ENCODE measurements at regions of chr16 and their contacts with region 1.

Region 1: GRCh38 chr16:8963825-8964441 is at the start of gene USP7:
- DNase-seq: peak; percentile 86
- ATAC-seq: peak; percentile 97
- H3K4me3 ChIP-seq: peak within 1 kb of the TSS; percentile 72
- H3K27ac ChIP-seq: peak within 1 kb of the TSS; percentile 78
- H3K4me1 ChIP-seq: peaks cover 18% of the 10 kb centered on the region
- H3K27me3 ChIP-seq: no peaks in the 10 kb centered on the region
- CTCF ChIP-seq: no peak
- POLR2A ChIP-seq: peak; percentile 77
- RAD21 ChIP-seq: no peak
- total RNA-seq, gene USP7: 28.3 and 45.8 TPM in 2 replicates

Region 2: GRCh38 chr16:8928467-8928957 is 35.4 kb before region 1 on chr16:
- CTCF ChIA-PET with region 1: no interaction called
- POLR2A ChIA-PET with region 1: no interaction called
- dilution Hi-C with region 1: no loop called
- in situ Hi-C with region 1: no loop called
- intact Hi-C with region 1: loop called (anchors 5 kb)
- DNase-seq: peak; percentile 60
- ATAC-seq: peak; percentile 63
- H3K4me3 ChIP-seq: no peak overlapping the region
- H3K27ac ChIP-seq: no peak overlapping the region
- H3K4me1 ChIP-seq: peaks cover 2% of the 10 kb centered on the region; the same call in 1 of the 2 replicates
- H3K27me3 ChIP-seq: no peaks in the 10 kb centered on the region
- CTCF ChIP-seq: no peak
- POLR2A ChIP-seq: no peak
- RAD21 ChIP-seq: no peak

Region 3: DNA sequence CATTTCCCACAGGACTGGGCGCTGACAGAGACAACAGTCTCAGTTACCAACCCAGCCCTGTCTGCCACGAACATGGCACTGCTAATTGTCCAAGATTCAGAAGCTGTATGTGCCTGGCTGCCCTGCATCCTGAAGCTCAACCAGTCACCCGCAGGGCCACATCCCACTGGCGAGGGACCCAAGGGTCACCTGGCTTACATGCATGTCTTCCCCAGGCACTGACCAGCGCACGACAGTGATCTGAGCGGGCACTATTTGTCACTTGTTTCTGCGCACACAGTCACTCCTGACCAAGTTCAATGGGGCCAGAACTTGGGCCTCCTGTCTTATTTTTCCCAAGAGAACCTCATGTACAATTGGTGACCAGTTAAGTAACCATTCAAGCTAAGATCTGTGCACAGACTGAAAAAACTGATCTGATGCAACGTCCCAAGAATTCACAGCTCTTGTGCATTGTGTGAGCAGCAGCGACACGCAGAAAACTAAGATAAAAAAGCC is 13.3 kb before region 1 on chr16:
- CTCF ChIA-PET with region 1: no interaction called
- POLR2A ChIA-PET with region 1: no interaction called
- dilution Hi-C with region 1: no loop called
- in situ Hi-C with region 1: no loop called
- intact Hi-C with region 1: loop called (anchors 1 kb)
- DNase-seq: peak; percentile 73
- ATAC-seq: peak; percentile 64
- H3K4me3 ChIP-seq: no peak overlapping the region
- H3K27ac ChIP-seq: peak overlapping the region; percentile 12; the same call in 1 of the 2 replicates
- H3K4me1 ChIP-seq: peaks cover 16% of the 10 kb centered on the region
- H3K27me3 ChIP-seq: no peaks in the 10 kb centered on the region
- CTCF ChIP-seq: no peak
- POLR2A ChIP-seq: no peak
- RAD21 ChIP-seq: no peak

Region 4: DNA sequence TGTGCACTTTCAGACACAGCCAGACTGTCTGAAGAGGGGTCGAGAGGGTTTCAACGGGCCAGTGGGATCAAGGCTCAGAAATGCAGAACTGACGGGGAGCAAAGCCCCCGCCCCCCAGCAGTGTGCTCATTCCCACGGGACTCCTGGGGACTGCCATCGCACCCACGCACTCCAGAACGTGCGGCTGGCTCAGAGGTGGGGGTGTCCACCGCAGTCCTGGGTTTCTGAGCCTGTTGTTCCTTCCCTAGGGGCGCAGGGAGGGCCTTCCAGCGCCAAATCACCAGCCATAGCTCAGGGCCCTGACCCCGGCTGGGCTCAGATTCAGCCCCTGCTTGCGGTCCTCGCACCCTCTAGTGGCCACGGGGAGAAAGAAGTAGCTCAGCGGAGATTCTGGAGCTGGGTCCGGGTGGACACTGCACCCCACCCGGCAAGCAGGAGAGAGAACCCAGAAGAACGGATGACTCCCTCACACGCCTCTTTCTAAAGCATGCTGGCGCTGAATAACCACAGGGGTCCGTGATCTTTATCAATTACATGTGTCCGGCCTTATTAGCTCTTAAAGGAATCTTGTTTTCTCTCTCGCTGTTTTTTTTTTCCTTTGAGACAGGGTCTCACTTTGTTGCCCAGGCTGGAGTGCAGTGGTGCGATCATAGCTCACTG is 44.8 kb after region 1 on chr16:
- CTCF ChIA-PET with region 1: interaction called, 4 read pairs
- POLR2A ChIA-PET with region 1: interaction called, 4 read pairs
- dilution Hi-C with region 1: no loop called
- in situ Hi-C with region 1: no loop called
- intact Hi-C with region 1: loop called (anchors 5 kb)
- DNase-seq: peak; percentile 56
- ATAC-seq: peak; percentile 97
- H3K4me3 ChIP-seq: no peak overlapping the region
- H3K27ac ChIP-seq: no peak overlapping the region
- H3K4me1 ChIP-seq: peaks cover 2% of the 10 kb centered on the region; the same call in 1 of the 2 replicates
- H3K27me3 ChIP-seq: no peaks in the 10 kb centered on the region
- CTCF ChIP-seq: peak; percentile 76
- POLR2A ChIP-seq: peak; percentile 30; the same call in 1 of the 2 replicates
- RAD21 ChIP-seq: peak; percentile 81

Region 5: DNA sequence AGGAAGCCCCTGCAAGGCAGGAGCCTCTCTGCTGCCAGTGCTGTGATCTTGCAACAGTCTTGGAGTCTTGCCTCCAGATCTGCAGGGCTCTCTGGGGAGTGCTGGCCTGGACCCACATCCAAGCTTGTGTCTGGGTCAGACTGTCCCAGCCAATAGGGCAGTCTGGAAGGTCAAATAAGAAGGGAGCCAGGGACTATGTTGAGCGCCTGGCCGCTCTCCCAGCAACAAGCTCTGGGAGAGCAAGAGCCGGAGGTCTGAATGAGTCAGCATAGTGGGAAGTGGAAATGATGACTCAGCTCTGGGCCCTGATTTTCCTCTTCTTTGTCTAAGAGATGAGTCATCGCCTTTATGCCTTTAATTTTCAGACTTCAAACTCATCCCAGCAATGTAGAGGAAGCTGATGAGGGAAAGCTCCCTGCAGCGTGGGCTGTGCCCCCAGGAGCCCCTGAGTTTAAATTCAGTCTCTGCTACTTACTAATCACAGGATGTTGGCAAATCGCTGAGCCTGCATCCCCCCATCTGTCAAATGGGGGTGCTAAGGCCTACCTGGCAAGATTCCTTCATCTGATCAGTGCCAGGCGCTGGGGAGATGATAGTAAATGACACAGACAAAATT is 83.9 kb after region 1 on chr16:
- CTCF ChIA-PET with region 1: no interaction called
- POLR2A ChIA-PET with region 1: no interaction called
- dilution Hi-C with region 1: no loop called
- in situ Hi-C with region 1: no loop called
- intact Hi-C with region 1: loop called (anchors 5 kb)
- DNase-seq: peak; percentile 99
- ATAC-seq: peak; percentile 89
- H3K4me3 ChIP-seq: no peak overlapping the region
- H3K27ac ChIP-seq: peak overlapping the region; percentile 74
- H3K4me1 ChIP-seq: peaks cover 12% of the 10 kb centered on the region
- H3K27me3 ChIP-seq: no peaks in the 10 kb centered on the region
- CTCF ChIP-seq: no peak
- POLR2A ChIP-seq: no peak; the same call in 1 of the 2 replicates
- RAD21 ChIP-seq: no peak; the same call in 1 of the 2 replicates

Region 6: GRCh38 chr16:9102379-9102778 is 138.4 kb after region 1 on chr16:
- CTCF ChIA-PET with region 1: no interaction called
- POLR2A ChIA-PET with region 1: no interaction called
- dilution Hi-C with region 1: no loop called
- in situ Hi-C with region 1: loop called (anchors 10 kb)
- intact Hi-C with region 1: loop called (anchors 5 kb)
- DNase-seq: peak; percentile 97
- ATAC-seq: peak; percentile 66
- H3K4me3 ChIP-seq: no peak overlapping the region
- H3K27ac ChIP-seq: no peak overlapping the region
- H3K4me1 ChIP-seq: peaks cover 33% of the 10 kb centered on the region
- H3K27me3 ChIP-seq: no peaks in the 10 kb centered on the region
- CTCF ChIP-seq: no peak
- POLR2A ChIP-seq: no peak
- RAD21 ChIP-seq: no peak